PC-9 (cell line): ENCODE measurements at regions of chr5 and their contacts with region 1.

Region 1: DNA sequence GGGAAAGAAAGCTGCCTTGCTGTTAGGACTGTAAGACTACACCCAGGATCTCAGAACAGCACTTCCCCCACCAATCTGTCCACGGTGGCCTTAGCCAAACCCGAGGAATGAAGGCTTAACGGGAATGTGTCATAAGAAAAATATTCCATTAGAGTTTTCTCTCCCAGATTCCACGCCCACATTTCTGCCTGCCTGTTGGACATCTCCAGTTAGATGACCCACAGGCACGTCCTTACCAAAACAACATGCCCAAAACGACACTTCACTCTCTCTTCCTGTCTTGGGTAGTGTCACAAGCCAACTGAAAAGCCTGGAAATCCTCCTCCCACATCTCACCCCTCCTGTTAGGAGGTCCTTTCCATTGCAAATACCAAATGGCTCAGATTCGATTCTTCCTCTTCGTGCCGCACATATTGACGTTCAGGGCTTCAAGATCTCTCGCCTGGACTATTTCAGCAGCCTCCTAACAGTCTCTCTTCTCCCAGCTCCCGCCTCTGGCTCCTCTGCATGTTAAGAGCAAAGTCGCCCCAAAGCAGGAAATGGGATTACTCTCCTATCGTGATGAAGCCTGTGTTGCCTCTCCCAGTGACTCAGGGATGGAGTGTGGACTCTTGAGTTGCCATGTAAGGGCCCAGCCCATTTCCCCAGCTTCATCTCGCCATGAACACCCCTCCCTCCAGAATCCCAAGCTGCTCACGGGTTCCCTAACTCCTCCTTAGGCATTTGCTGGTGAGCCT is 159.3 kb downstream of the NR3C1 start:
- DNase-seq: peak; percentile 84 to 97
- H3K4me3 ChIP-seq: peak overlapping the region; percentile 43; the same call in 1 of the 2 replicates
- H3K27ac ChIP-seq: peak overlapping the region; percentile 91
- H3K4me1 ChIP-seq: peaks cover 68% of the 10 kb centered on the region
- H3K27me3 ChIP-seq: no peaks in the 10 kb centered on the region
- CTCF ChIP-seq: no peak

Region 2: GRCh38 chr5:142981886-142982820 is 262.0 kb before region 1 on chr5:
- CTCF ChIA-PET with region 1: no interaction called
- POLR2A ChIA-PET with region 1: no interaction called
- intact Hi-C with region 1: loop called (anchors 1 kb)
- DNase-seq: peak; percentile 69 to 96
- H3K4me3 ChIP-seq: peak overlapping the region; percentile 29; the same call in 1 of the 2 replicates
- H3K27ac ChIP-seq: peak overlapping the region; percentile 90
- H3K4me1 ChIP-seq: peaks cover 33% of the 10 kb centered on the region
- H3K27me3 ChIP-seq: no peaks in the 10 kb centered on the region
- CTCF ChIP-seq: no peak

Region 3: GRCh38 chr5:143153332-143154119 is 90.6 kb before region 1 on chr5:
- CTCF ChIA-PET with region 1: no interaction called
- POLR2A ChIA-PET with region 1: interaction called, 11 read pairs
- intact Hi-C with region 1: no loop called
- DNase-seq: no peak
- H3K4me3 ChIP-seq: no peak overlapping the region
- H3K27ac ChIP-seq: no peak overlapping the region
- H3K4me1 ChIP-seq: peaks cover 15% of the 10 kb centered on the region
- H3K27me3 ChIP-seq: no peaks in the 10 kb centered on the region
- CTCF ChIP-seq: no peak

Region 4: DNA sequence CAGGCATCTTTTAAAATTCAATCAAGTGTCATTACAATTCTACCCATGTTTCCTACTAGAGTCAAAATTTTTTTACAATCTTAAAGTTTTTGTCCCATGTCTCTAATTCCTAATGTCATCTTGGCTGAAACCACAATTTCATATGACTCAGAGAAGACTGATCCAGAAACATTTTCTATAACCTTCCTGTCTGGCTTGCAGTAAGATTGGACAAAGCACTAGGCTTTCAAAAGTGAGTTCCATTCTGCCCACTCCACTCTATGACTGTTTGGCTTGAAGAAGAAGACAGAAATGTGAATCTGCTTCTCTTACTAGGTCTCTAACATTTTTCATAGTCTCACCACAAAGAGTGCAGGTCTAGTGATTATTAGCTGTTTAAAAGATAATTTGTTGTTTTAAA is 70.5 kb after region 1 on chr5:
- CTCF ChIA-PET with region 1: no interaction called
- POLR2A ChIA-PET with region 1: interaction called, 3 read pairs
- intact Hi-C with region 1: loop called (anchors 5 kb)
- DNase-seq: peak in 1 of 2 experiments; percentile 46
- H3K4me3 ChIP-seq: 0 out of 2 replicates have a peak overlapping the region, but pooled peaks have one; percentile 17
- H3K27ac ChIP-seq: peak overlapping the region; percentile 31; the same call in 1 of the 2 replicates
- H3K4me1 ChIP-seq: peaks cover 54% of the 10 kb centered on the region
- H3K27me3 ChIP-seq: no peaks in the 10 kb centered on the region
- CTCF ChIP-seq: no peak

Region 5: DNA sequence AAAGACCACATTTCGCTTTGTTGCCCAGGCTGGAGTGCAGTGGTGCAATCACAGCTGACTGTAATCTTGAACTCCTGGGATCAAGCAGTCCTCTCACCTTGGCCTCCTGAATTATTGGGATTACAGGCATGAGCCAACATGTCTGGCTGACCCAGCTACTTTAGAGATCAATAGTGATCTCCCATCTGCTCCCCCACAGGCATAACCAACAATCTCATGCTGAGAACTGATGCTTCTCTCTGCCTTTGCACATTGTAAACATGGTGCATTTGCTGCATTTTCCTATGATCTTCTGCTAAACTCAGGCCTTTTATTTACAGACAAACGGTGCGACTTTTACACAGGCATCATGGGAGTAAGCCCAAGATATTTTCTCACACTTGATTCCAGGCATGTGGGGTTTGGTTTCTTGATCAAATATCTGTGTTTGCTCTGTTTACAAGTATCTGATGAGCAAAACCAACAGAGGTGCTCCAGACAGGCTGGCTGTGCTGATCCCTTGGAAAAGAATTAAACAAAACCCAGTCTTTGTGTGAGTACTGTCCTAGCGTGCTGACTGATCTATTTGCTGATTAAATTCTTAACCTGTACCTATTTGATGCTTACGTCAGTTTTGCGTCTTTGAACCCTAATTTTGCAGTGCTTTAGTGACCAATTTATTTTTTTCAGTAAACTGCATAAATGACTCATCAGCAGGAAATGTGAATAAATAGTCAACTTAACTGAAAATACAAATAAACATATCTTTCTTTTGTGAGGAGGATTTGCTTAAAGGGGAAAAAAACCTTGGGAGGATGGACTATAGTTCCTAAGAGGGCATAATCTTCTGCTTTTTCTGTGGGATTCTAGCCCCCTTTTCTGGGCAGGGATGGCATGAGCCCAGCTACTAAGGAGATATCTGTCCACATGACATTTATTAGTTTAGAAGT is 351.0 kb after region 1 on chr5:
- CTCF ChIA-PET with region 1: no interaction called
- POLR2A ChIA-PET with region 1: no interaction called
- intact Hi-C with region 1: loop called (anchors 5 kb)
- DNase-seq: peak; percentile 46 to 83
- H3K4me3 ChIP-seq: 0 out of 2 replicates have a peak overlapping the region, but pooled peaks have one; percentile 16
- H3K27ac ChIP-seq: peak overlapping the region; percentile 97
- H3K4me1 ChIP-seq: peaks cover 29% of the 10 kb centered on the region
- H3K27me3 ChIP-seq: no peaks in the 10 kb centered on the region
- CTCF ChIP-seq: no peak